CD8-positive, alpha-beta T cell (primary cell): ENCODE measurements at regions of chr17 and their contacts with region 1.

Region 1: DNA sequence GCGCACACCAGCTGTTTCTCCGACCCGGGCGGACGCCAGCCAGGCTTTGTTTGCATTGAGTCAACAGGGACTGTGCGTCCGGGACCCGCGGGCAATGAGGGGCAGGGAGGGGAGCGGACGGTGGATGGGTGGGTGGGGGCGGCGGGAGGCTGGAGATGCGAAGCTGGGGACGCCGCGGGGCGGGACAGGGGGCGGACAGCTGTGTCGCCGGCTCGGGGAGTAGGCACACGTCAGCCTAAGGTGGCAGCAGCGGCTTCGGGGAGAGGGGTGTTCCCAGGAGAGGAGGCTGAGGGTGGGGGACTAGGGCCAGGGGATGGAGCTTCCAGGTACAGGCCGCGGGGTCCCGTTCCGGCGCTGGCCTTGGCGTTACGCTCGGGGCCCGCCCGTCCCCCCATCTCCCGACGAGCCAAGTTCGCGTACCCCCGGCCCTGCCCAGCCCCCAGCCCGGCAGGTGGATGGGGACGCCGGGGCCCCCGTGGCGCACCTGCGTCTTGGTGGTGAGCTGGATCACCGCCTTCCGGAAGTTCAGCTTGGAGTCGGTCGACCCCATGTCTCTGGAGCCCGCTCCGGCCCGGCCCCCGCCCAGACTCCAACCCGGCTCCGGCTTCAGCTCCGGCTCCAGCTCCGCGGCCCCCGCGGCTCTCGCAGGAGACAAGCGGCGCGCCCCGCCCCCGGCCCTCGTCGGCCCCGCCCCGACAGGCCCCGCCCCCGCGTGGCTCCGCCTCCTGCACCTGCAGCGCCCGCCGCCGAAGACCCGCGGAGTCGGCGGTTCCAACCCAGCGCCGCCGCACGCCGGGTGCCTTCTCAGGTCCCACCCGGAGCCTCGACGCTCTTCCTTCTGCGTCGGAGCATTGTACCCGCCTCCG is at the start of gene HID1:
- DNase-seq: peak; percentile 64 to 90 (median 80)
- ATAC-seq: peak; percentile 93
- H3K4me3 ChIP-seq: peak within 1 kb of the TSS; percentile 53 to 69
- H3K4me3 Mint-ChIP-seq: peak within 1 kb of the TSS; percentile 85
- H3K27ac ChIP-seq: peak within 1 kb of the TSS in 1 of 2 experiments; percentile 23
- H3K27ac Mint-ChIP-seq: peak within 1 kb of the TSS; percentile 52
- H3K4me1 ChIP-seq: peaks cover 10% of the 10 kb centered on the region
- H3K4me1 Mint-ChIP-seq: peaks cover 4% of the 10 kb centered on the region
- H3K27me3 ChIP-seq: peaks cover 3 to 9% of the 10 kb centered on the region in 2 experiments
- H3K27me3 Mint-ChIP-seq: peaks cover 11% of the 10 kb centered on the region
- CTCF ChIP-seq: no peak
- total RNA-seq, gene HID1: 25.9 to 26.4 TPM

Region 2: DNA sequence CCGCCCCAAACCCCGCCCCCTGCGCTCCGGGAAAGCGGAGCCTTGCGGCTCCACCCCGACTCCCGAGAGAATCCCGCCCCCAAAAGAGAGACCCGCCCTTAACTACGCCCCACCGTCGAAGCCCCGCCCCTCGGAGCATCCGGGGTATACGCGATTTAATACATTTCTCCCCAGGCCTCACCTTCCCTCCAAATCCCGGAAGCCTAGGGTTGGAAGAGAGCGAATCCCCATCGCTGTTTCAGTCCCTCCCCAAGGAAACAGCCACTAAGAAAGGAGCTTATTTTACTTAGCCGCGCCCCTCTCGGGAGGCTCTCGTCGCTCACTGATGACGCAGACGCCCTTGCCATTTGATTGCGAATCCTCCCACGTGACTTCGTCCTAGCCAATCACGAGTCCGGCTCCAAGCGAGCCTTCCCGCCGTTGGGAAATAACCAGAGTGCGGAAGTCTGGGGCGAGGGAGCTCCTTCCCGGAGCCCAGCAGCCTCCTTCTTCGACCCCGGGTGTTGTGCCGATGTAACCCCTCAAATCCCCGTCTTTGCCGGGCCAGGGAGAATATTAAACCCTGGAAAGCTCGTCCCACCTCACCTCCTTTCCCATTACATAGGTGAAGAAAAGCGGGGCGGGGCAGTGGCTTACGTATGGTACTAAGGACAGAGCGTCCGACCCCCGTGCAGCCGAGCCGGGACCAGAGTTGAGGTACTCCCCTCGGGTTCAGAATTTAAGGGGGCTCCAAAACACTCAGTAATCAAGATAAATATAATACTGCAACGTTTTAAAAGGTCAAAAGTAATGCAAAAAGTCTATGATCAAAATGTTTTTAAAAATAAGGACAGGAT is 99.1 kb before region 1 on chr17:
- CTCF ChIA-PET with region 1: no interaction called
- POLR2A ChIA-PET with region 1: no interaction called
- intact Hi-C with region 1: no loop called
- DNase-seq: peak; percentile 98 to 100 (median 99)
- ATAC-seq: peak; percentile 93
- H3K4me3 ChIP-seq: peak overlapping the region; percentile 75 to 92
- H3K4me3 Mint-ChIP-seq: peak overlapping the region; percentile 96
- H3K27ac ChIP-seq: peak overlapping the region; percentile 78 to 99
- H3K27ac Mint-ChIP-seq: peak overlapping the region; percentile 99
- H3K4me1 ChIP-seq: peaks cover 17% of the 10 kb centered on the region
- H3K4me1 Mint-ChIP-seq: peaks cover 23% of the 10 kb centered on the region
- H3K27me3 ChIP-seq: no peaks in the 10 kb centered on the region
- H3K27me3 Mint-ChIP-seq: no peaks in the 10 kb centered on the region
- CTCF ChIP-seq: no peak

Region 3: GRCh38 chr17:74987418-74987908 is 15.1 kb after region 1 on chr17 and contains the start of gene CDR2L:
- CTCF ChIA-PET with region 1: interaction called, 3 read pairs
- POLR2A ChIA-PET with region 1: interaction called, 14 read pairs
- intact Hi-C with region 1: loop called (anchors 1 kb)
- DNase-seq: peak; percentile 82 to 95 (median 92)
- ATAC-seq: peak; percentile 97
- H3K4me3 ChIP-seq: peak within 1 kb of the TSS; percentile 48 to 50
- H3K4me3 Mint-ChIP-seq: peak within 1 kb of the TSS; percentile 83
- H3K27ac ChIP-seq: no peak within 1 kb of the TSS
- H3K27ac Mint-ChIP-seq: no peak within 1 kb of the TSS
- H3K4me1 ChIP-seq: peaks cover 10% of the 10 kb centered on the region
- H3K4me1 Mint-ChIP-seq: peaks cover 15% of the 10 kb centered on the region
- H3K27me3 ChIP-seq: peaks cover 0 to 5% of the 10 kb centered on the region in 2 experiments
- H3K27me3 Mint-ChIP-seq: peaks cover 2% of the 10 kb centered on the region
- CTCF ChIP-seq: no peak
- total RNA-seq, gene CDR2L: 0.14 to 0.27 TPM